Caco-2 (cell line): ENCODE measurements at regions of chr19 and their contacts with region 1.

Region 1: GRCh38 chr19:48553676-48554386 is 1.9 kb downstream of the SULT2B1 start:
- DNase-seq: peak; percentile 99 to 100
- H3K4me3 ChIP-seq: peak overlapping the region; percentile 24
- H3K4me3 Mint-ChIP-seq: peak overlapping the region; percentile 75
- H3K27ac Mint-ChIP-seq: peak overlapping the region; percentile 98
- H3K4me1 ChIP-seq: peaks cover 63% of the 10 kb centered on the region
- H3K4me1 Mint-ChIP-seq: peaks cover 43% of the 10 kb centered on the region
- H3K27me3 ChIP-seq: no peaks in the 10 kb centered on the region
- H3K27me3 Mint-ChIP-seq: no peaks in the 10 kb centered on the region
- CTCF ChIP-seq: no peak

Region 2: DNA sequence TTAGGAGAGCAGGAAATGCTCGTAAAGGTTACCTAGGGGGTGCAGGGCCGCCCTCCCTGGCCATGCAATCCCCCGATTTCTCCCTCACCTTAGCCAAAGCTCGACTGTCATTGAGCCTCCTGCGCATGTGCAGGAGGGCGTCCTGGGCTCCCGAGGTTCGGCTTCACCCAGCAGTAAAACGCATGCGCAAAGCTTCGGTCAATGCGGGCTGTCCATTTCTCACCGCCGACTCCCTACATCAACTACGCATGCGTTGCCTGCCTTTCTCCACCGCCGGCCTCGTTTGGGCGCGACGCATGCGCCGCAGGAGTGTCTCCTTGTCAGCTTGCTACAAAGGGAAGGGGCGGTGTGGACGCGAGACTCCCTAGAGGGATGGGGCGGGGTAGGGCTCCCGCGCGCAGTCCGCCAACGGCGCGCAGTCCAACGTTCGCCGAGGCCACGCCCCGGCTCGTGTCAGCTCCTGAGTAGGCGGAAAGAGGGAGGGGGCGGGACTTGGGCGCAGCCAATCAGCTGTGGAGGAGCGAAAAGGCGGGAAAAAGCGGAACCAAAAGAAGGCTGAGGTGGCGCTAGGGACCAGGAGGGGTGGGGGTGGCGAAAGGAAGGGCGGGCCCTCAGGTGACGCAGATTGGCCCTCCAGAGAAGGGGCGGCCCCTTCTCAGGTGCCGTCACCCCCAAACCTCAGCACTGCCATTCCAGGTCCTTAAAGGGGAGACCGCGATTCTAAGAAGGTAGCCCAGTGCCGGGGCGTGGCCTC is 189.8 kb before region 1 on chr19 and contains the starts of genes SYNGR4 and TMEM143:
- CTCF ChIA-PET with region 1: no interaction called
- POLR2A ChIA-PET with region 1: interaction called, 24 read pairs
- intact Hi-C with region 1: no loop called
- DNase-seq: peak; percentile 100
- H3K4me3 ChIP-seq: peak within 1 kb of the TSS; percentile 43
- H3K4me3 Mint-ChIP-seq: peak within 1 kb of the TSS; percentile 83
- H3K27ac Mint-ChIP-seq: peak within 1 kb of the TSS; percentile 84
- H3K4me1 ChIP-seq: peaks cover 6% of the 10 kb centered on the region; the same call in 1 of the 2 replicates
- H3K4me1 Mint-ChIP-seq: peaks cover 14% of the 10 kb centered on the region
- H3K27me3 ChIP-seq: no peaks in the 10 kb centered on the region
- H3K27me3 Mint-ChIP-seq: no peaks in the 10 kb centered on the region
- CTCF ChIP-seq: no peak
- total RNA-seq, gene SYNGR4: 0.32 TPM in 1 of 2 replicates, not detected in the other
- total RNA-seq, gene TMEM143: 20.4 and 24.4 TPM in 2 replicates

Region 3: GRCh38 chr19:48492925-48493717 is 60.7 kb before region 1 on chr19:
- CTCF ChIA-PET with region 1: interaction called, 11 read pairs
- POLR2A ChIA-PET with region 1: interaction called, 21 read pairs
- intact Hi-C with region 1: no loop called
- DNase-seq: peak; percentile 97 to 99
- H3K4me3 ChIP-seq: peak overlapping the region; percentile 77
- H3K4me3 Mint-ChIP-seq: peak overlapping the region; percentile 64
- H3K27ac Mint-ChIP-seq: peak overlapping the region; percentile 81
- H3K4me1 ChIP-seq: peaks cover 18% of the 10 kb centered on the region
- H3K4me1 Mint-ChIP-seq: peaks cover 38% of the 10 kb centered on the region
- H3K27me3 ChIP-seq: no peaks in the 10 kb centered on the region
- H3K27me3 Mint-ChIP-seq: no peaks in the 10 kb centered on the region
- CTCF ChIP-seq: no peak

Region 4: DNA sequence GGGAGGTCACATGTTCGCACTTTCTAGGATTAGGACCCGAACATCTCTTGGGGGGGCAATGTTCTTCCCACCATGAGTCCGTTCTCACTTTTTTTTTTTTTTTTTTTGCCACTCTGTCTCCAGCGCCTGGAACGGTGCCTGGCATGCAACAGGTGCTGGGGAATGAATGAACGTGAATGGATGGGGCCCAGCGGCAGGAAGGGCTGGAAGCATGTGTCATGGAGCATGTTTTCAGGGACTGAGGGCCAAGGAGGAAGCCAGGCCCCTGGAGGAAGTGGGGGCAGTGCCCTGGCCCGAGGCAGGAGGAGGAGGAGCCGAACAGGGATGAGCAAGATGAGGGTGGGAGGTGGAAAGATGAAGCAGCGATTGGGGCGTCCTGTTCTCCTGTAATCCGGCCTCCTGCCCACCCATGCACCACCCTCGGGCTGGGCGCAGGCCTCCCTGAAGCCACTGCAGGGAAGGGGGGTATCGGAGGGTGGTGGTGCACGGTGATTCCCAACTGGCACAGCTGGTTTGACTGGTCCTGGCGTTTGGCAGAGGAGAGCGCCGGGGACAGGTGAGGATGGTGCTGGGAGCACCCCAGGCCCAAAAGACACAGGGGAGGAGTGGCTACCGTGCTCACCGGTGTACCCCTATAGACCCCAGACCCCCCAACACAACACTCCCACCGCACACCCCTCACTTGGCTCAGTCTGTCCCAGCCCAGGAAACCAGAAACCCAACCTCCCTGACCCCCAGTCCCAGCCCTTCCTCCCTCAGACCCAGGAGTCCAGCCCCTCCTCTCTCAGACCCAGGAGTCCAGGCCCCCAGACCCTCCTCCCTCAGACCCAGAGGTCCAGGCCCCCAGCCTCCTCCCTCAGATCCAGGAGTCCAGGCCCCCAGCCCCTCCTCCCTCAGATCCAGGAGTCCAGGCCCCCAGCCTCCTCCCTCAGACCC is 10.4 kb before region 1 on chr19:
- CTCF ChIA-PET with region 1: no interaction called
- POLR2A ChIA-PET with region 1: interaction called, 15 read pairs
- intact Hi-C with region 1: no loop called
- DNase-seq: peak; percentile 52 to 61
- H3K4me3 ChIP-seq: no peak overlapping the region
- H3K4me3 Mint-ChIP-seq: no peak overlapping the region
- H3K27ac Mint-ChIP-seq: peak overlapping the region; percentile 23
- H3K4me1 ChIP-seq: peaks cover 10% of the 10 kb centered on the region
- H3K4me1 Mint-ChIP-seq: peaks cover 16% of the 10 kb centered on the region
- H3K27me3 ChIP-seq: no peaks in the 10 kb centered on the region
- H3K27me3 Mint-ChIP-seq: no peaks in the 10 kb centered on the region
- CTCF ChIP-seq: no peak

Region 5: GRCh38 chr19:48588670-48589399 is 35.0 kb after region 1 on chr19:
- CTCF ChIA-PET with region 1: interaction called, 16 read pairs
- POLR2A ChIA-PET with region 1: interaction called, 3 read pairs
- intact Hi-C with region 1: loop called (anchors 1 kb)
- DNase-seq: peak; percentile 89 to 93
- H3K4me3 ChIP-seq: peak overlapping the region; percentile 27
- H3K4me3 Mint-ChIP-seq: peak overlapping the region; percentile 79
- H3K27ac Mint-ChIP-seq: peak overlapping the region; percentile 74
- H3K4me1 ChIP-seq: peaks cover 3% of the 10 kb centered on the region
- H3K4me1 Mint-ChIP-seq: peaks cover 14% of the 10 kb centered on the region
- H3K27me3 ChIP-seq: no peaks in the 10 kb centered on the region
- H3K27me3 Mint-ChIP-seq: no peaks in the 10 kb centered on the region
- CTCF ChIP-seq: peak; percentile 95 to 97

Region 6: GRCh38 chr19:48746738-48747575 is 193.1 kb after region 1 on chr19 and contains the start of gene IZUMO1:
- CTCF ChIA-PET with region 1: no interaction called
- POLR2A ChIA-PET with region 1: interaction called, 11 read pairs
- intact Hi-C with region 1: no loop called
- DNase-seq: no peak
- H3K4me3 ChIP-seq: no peak within 1 kb of the TSS
- H3K4me3 Mint-ChIP-seq: no peak within 1 kb of the TSS
- H3K27ac Mint-ChIP-seq: no peak within 1 kb of the TSS
- H3K4me1 ChIP-seq: no peaks in the 10 kb centered on the region; the same call in none of the 2 replicates
- H3K4me1 Mint-ChIP-seq: peaks cover 8% of the 10 kb centered on the region
- H3K27me3 ChIP-seq: no peaks in the 10 kb centered on the region
- H3K27me3 Mint-ChIP-seq: no peaks in the 10 kb centered on the region
- CTCF ChIP-seq: no peak
- total RNA-seq, gene IZUMO1: 8.9 and 10.3 TPM in 2 replicates